ENCODE measurements at regions of chr5 and their contacts with region 1.

Region 1: GRCh38 chr5:94736498-94736897 is 118.0 kb downstream of the SLF1 start:
- DNase-seq: no peak
- H3K4me3 ChIP-seq: no peak overlapping the region
- CTCF ChIP-seq: no peak

Region 2: DNA sequence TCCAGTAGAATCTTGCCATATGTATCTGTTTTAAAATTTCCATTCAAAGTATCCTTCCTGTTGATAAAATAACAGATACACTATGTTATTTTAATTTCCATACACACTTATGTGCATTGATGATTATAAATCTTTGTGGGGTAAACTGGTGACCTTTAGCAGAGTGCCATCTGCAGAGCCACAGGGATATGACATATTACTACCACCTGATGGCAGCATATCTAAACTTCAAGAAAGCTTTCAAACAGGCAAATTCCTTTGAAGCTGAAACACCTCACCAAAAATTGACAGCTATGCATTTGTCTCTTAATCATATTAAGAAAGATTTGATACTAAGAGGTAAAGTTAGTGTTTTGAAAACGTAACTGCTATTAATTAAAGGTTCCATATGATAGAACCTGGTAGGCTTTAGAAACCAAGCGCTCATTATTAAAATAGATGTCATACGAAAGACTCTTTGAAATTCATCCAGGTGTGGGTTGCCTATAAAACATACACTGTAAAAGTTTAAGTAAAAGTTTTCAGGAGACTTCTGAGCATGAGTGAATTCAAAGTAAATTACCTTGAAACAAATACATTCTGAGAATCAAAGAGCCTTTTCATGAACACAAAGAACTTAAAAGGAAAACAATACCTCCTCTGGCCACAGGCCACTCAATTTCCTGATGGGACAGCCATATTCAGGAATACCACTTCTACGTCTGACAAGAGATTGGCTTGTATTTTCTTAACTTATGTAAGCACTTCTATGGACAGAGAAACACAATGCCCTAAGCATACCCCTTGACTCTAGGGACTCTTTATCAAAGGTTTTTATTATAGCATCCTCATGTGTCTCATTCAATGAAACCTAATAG is 211.4 kb before region 1 on chr5:
- CTCF ChIA-PET with region 1: interaction called, 42 read pairs
- POLR2A ChIA-PET with region 1: no interaction called
- DNase-seq: no peak
- H3K4me3 ChIP-seq: no peak overlapping the region
- CTCF ChIP-seq: peak; percentile 39

Region 3: DNA sequence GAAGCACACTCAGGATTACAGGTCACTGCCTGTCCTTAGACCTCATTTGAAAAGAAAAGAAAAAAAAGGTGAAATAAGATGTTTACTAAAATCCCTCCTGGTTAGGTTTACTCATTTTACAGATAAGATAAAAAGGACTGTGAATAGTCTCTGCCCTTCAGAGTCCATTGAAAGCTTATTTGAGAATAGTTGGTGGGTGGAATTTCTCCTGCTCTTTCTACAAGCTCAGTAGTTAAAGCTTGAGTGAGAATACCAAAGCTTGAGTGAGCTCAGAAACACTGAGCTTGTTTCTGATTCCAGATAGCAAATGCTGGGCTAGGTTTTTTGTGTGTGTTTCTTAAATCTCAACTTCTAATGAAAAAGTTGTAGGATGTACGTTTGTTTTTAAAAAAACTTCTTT is 11.4 kb before region 1 on chr5:
- CTCF ChIA-PET with region 1: interaction called, 16 read pairs
- POLR2A ChIA-PET with region 1: no interaction called
- DNase-seq: no peak
- H3K4me3 ChIP-seq: no peak overlapping the region
- CTCF ChIP-seq: no peak

Region 4: DNA sequence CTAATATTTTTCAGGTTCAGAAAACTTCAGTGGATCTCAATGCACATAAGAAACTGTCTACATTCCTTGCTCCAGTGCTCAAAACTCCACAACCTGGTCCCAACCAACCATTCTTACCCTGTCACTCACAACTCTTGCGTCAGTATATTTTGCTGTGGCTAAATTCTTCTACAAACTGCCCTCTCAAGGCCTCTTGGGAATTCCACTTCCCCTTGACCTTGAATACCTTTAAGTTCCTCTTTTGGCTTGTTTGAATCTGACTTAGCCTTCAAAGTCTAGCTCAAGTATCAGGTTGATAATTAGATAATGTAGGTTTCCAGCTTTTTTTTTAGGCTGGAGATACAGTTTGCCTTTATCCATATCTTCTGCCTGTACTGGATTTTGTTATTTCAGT is 10.2 kb after region 1 on chr5:
- CTCF ChIA-PET with region 1: interaction called, 23 read pairs
- POLR2A ChIA-PET with region 1: no interaction called
- DNase-seq: no peak
- H3K4me3 ChIP-seq: no peak overlapping the region
- CTCF ChIP-seq: no peak

Region 5: GRCh38 chr5:95130941-95131340 is 394.4 kb after region 1 on chr5:
- CTCF ChIA-PET with region 1: no interaction called
- POLR2A ChIA-PET with region 1: no interaction called
- DNase-seq: no peak
- H3K4me3 ChIP-seq: no peak overlapping the region
- CTCF ChIP-seq: no peak

Measured in AG04449 (cell line).